Activated T-helper 1 cell treated with anti-CD3 and anti-CD28 coated beads, Interleukin-12 subunit alpha, Interleukin-12 subunit beta, Interleukin-2, Interleukin-4 antibody, amounts not matched to agents 30 ng/mL and 10 ng/mL and 1 ng/mL, durations not matched to agents 14 hours and 24 hours and 36 hours (primary cell): ENCODE measurements at regions of chr7 and their contacts with region 1.

Region 1: DNA sequence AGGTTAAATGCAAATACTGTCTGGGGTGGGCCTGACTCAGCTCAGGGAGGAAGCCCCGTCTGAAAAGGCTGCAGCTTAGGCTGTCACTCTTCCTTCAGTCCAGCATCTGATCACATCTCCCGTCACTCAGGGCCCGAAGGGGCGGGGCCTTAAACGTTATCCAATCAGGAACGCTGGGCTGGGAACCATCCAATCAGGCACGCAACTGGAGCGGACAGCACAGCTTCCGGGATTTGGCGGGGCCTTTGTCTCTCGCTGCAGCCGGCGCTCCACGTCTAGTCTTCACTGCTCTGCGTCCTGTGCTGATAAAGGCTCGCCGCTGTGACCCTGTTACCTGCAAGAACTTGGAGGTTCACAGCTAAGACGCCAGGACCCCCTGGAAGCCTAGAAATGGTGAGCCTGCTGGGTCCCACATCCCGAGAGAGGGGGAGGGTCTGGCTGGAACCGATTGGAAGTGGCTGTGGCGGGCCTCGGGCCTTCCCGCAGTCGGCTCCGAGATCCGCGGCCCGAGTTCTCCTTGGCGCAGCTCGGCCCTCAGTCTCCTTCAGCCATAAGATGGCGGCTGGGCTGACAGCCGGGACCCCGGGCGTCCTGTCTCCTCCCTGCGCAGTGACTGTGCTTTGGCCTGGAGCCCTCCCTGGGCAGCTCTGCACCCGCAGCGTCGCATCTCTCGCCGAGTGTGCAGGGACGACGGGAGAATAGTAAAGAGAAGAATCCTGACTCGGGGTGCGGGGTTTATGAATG is at the start of gene ZNF92:
- DNase-seq: peak; percentile 95
- H3K4me3 Mint-ChIP-seq: peak within 1 kb of the TSS; percentile 98
- H3K27ac Mint-ChIP-seq: peak within 1 kb of the TSS; percentile 93
- H3K4me1 Mint-ChIP-seq: peaks cover 34% of the 10 kb centered on the region
- H3K27me3 Mint-ChIP-seq: no peaks in the 10 kb centered on the region
- total RNA-seq, gene ZNF92: 14.7 and 16.6 TPM in 2 replicates

Region 2: DNA sequence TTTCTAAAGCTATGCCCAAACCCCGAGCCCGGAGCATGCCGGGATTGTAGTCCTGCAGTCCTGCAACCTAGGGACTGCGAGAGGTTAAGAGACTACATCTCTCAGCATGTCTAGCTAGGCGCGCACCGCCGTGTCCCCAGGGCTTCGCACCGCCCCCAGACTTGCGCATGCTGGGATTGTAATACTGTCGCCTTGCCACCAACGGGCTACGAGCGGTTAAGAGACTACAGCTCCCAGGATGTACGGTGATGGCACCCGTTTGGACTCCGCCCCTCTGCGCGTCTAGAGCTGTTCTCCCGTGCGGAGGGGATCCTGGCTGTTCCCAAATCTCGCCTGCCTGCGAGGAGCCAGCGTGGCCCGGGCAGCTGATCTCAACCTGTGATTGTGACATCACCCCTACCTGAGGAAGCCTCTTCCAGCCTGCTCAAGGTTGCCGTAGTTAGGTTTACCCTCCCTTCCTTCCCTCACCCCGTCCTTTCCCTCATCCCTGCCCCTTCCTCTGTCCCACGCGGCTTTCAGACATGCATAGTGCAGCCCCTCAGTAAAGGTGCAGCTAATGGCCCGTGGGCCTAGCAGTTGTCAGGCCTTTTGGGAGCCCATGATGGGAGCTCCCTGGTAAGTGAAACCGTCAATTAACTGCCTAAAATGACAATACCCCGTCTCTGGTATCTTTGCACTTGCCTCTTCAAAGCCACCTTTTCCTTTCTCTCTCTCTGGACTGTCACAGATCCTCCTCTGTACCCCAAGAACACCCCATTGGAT is 1066.3 kb before region 1 on chr7:
- intact Hi-C with region 1: loop called (anchors 1 kb)
- DNase-seq: peak; percentile 91
- H3K4me3 Mint-ChIP-seq: peak overlapping the region; percentile 89
- H3K27ac Mint-ChIP-seq: peak overlapping the region; percentile 88
- H3K4me1 Mint-ChIP-seq: peaks cover 17% of the 10 kb centered on the region
- H3K27me3 Mint-ChIP-seq: no peaks in the 10 kb centered on the region

Region 3: DNA sequence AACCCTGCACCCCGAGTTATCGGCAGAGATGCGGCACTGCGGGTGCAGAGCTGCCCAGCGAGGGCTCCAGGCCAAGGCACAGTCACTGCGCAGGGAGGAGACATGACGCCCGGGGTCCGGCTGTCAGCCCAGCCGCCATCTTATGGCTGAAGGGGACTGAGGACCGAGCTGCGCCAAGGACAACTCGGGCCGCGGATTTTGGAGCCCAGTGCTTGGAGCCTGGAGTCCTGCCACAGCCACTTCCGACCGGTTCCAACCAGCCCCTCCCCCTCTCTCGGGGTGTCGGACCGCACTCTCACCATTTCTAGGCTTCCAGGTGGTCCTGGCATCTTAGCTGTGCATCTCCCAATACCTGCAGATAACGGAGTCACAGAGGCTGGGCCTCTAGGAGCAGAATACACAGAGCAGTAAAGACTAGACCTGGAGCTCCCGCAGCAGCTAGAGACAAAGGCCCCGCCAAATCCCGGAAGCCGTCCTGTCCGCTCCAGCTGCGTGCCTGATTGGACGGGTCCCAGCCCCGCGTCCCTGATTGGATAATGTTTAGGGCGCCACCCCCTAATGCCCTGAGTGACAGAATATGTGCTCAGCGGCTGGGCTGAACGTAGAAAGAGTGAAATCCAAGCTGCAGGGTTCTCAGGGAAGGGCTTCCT is 811.0 kb before region 1 on chr7 and contains the start of gene ZNF680:
- intact Hi-C with region 1: loop called (anchors 5 kb)
- DNase-seq: peak; percentile 85
- H3K4me3 Mint-ChIP-seq: peak within 1 kb of the TSS; percentile 99
- H3K27ac Mint-ChIP-seq: peak within 1 kb of the TSS; percentile 98
- H3K4me1 Mint-ChIP-seq: peaks cover 18% of the 10 kb centered on the region
- H3K27me3 Mint-ChIP-seq: no peaks in the 10 kb centered on the region
- total RNA-seq, gene ZNF680: 8.5 and 12.2 TPM in 2 replicates

Region 4: GRCh38 chr7:64794171-64794844 is 579.5 kb before region 1 on chr7 and contains the start of gene ZNF138:
- intact Hi-C with region 1: loop called (anchors 2 kb)
- DNase-seq: peak; percentile 90
- H3K4me3 Mint-ChIP-seq: peak within 1 kb of the TSS; percentile 98
- H3K27ac Mint-ChIP-seq: peak within 1 kb of the TSS; percentile 98
- H3K4me1 Mint-ChIP-seq: peaks cover 21% of the 10 kb centered on the region
- H3K27me3 Mint-ChIP-seq: no peaks in the 10 kb centered on the region
- total RNA-seq, gene ZNF138: 7.7 and 7.9 TPM in 2 replicates

Region 5: GRCh38 chr7:65006094-65006992 is 367.4 kb before region 1 on chr7 and contains the start of gene ERV3-1:
- intact Hi-C with region 1: loop called (anchors 1 kb)
- DNase-seq: peak; percentile 90
- H3K4me3 Mint-ChIP-seq: peak within 1 kb of the TSS; percentile 97
- H3K27ac Mint-ChIP-seq: peak within 1 kb of the TSS; percentile 91
- H3K4me1 Mint-ChIP-seq: peaks cover 29% of the 10 kb centered on the region
- H3K27me3 Mint-ChIP-seq: no peaks in the 10 kb centered on the region
- total RNA-seq, gene ERV3-1: 6.7 and 8.7 TPM in 2 replicates

Region 6: GRCh38 chr7:65216459-65216858 is 157.3 kb before region 1 on chr7:
- intact Hi-C with region 1: loop called (anchors 2 kb)
- DNase-seq: peak; percentile 27
- H3K4me3 Mint-ChIP-seq: no peak overlapping the region
- H3K27ac Mint-ChIP-seq: no peak overlapping the region
- H3K4me1 Mint-ChIP-seq: peaks cover 6% of the 10 kb centered on the region
- H3K27me3 Mint-ChIP-seq: no peaks in the 10 kb centered on the region

Region 7: GRCh38 chr7:65872776-65873581 is 499.2 kb after region 1 on chr7 and contains the start of gene VKORC1L1:
- intact Hi-C with region 1: loop called (anchors 2 kb)
- DNase-seq: peak; percentile 92
- H3K4me3 Mint-ChIP-seq: peak within 1 kb of the TSS; percentile 85
- H3K27ac Mint-ChIP-seq: peak within 1 kb of the TSS; percentile 73
- H3K4me1 Mint-ChIP-seq: peaks cover 4% of the 10 kb centered on the region
- H3K27me3 Mint-ChIP-seq: no peaks in the 10 kb centered on the region
- total RNA-seq, gene VKORC1L1: 28.8 and 30.1 TPM in 2 replicates